Activated T-helper 2 cell treated with anti-CD3 and anti-CD28 coated beads, Interferon-gamma antibody, Interleukin-2, Interleukin-4, amounts not matched to agents 10 μg/mL and 5 μg/mL and 100 μg/mL, durations not matched to agents 14 hours and 24 hours and 36 hours (primary cell): ENCODE measurements at regions of chr5 and their contacts with region 1.

Region 1: DNA sequence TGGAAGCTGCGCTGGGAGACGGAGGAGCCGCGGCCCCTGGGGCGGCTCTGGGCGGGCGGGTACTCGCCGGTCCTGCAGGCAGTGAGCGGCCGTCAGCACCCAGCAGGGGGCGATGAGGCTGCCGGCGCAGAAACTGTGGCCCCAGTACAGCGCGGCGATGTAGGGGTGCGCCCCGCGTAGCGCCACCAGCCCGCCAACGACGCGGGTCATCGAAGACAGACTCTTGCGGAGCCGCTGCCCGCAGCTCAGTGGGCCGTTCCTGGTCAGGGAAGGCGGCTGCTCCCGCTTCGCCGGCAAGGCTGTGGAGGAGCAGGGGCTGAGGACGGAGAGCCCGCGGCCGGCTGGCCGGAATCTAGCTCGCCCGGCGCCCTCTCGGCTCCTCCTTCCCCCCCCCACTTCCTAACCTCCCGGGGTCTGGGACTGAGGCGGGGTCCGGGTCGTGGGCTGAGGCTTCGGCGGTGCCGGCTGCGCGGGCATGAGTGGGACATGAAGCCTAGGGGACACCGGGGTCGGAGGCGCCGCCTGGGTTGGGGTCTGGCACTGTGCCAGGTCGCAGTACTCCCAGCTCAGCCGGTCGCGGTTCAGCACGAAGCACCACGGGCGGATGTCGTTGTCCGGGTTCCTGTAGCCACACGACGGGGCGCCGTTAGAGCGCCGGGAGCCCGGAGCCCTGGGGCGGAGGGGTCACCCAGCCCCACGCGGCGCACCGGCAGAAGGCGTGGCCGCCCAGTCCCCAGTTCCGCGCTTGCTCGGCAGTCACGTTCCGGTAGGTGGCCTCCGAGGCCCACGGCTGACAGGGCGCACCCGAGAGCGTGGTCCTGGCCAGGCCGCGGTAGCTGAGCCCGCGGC is 3.6 kb upstream of the PFN3 start:
- DNase-seq: peak; percentile 81
- H3K4me3 Mint-ChIP-seq: peak overlapping the region; percentile 79
- H3K27ac Mint-ChIP-seq: no peak overlapping the region
- H3K4me1 Mint-ChIP-seq: peaks cover 19% of the 10 kb centered on the region
- H3K27me3 Mint-ChIP-seq: peaks cover 23% of the 10 kb centered on the region

Region 2: DNA sequence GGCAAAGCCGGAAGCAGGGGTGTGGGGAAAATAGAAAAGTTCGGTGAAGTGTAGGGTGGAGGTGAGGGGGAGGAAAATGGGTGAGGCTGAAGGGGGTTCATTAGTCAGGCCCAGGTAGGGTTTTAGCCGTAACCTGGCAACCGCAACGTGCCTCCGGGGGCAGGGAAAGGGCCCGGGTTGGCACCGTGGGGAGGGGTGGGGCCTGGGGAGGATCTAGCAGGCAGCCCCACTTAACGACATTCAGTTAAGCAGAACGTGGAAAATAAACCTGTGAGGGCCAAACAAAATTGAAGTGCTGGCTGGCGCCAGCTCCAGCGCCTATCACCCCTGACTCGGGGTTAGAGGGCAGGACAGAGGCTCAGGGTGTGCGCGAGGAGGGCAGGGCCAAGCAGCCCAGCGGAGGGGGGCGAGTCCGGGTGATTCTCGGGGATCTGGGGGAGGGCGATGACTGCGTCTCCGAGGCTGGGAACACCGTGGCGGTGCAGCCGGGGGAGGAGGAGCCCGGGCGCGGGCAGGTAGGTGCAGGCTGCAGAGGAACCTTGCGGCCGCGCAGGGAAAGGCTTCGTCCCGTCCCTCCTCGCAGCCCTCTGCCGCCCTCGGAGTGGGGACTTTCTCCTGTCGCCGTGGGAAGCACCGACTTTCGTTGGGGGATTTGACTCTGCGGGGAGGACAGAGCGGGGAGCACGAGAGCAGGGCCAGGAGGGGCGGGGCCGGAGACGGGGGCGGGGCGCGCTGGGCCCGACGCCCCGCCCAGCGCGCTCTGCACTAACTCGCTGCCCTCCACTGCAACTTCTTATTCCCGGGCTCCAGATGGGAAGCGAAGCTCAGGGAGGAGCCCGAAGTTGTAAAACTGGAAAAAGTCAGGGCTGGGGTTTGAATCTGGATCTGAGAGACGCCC is 41.2 kb before region 1 on chr5:
- intact Hi-C with region 1: loop called (anchors 5 kb)
- DNase-seq: peak; percentile 44
- H3K4me3 Mint-ChIP-seq: peak overlapping the region; percentile 64
- H3K27ac Mint-ChIP-seq: peak overlapping the region; percentile 43
- H3K4me1 Mint-ChIP-seq: peaks cover 51% of the 10 kb centered on the region
- H3K27me3 Mint-ChIP-seq: no peaks in the 10 kb centered on the region

Region 3: DNA sequence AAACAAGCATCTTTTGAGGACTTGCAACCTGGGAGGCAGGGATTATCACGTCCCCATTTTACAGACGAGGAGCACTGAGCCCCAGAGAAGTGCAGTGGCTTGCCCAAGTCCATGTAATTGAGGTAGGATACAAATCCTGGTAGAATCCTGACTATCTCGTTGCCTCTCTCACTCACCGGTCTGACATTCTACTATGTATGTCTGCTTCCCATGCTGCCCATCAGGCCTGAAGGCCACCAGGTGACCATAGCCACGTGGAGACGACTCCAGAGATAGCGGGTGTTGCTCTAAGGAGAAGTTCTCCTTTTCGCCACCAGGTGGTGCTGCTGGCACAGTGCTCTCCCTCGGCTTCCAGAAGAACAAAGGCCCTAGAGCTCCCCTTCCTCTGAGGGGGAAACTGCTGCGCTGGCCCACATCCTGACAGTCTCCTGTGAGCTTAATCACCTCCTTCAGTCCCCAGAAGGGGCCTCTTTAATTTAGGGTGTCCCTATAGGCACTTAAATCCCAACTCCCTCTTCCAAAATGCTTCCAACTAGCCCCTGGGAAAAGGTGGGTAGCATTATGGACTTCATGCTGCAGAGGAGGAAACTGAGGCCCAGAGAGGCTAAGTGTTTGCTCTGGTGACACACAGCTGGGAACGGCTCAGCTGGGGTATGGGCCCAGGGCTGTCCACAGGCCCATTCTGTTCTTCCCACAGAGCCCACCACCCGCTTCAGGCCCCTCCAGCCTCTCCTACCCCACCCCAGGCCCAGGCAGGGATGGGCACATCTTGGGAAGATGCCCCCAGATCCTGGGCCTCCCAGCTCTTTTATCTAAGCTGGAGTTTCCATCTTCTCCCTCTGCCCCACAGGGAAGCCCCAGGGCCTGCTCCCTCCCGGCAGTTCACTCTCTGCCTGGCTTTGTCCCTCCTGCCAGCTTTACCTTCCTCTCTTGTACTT is 13.4 kb before region 1 on chr5:
- intact Hi-C with region 1: loop called (anchors 1 kb)
- DNase-seq: peak; percentile 82
- H3K4me3 Mint-ChIP-seq: no peak overlapping the region
- H3K27ac Mint-ChIP-seq: peak overlapping the region; percentile 63
- H3K4me1 Mint-ChIP-seq: peaks cover 26% of the 10 kb centered on the region
- H3K27me3 Mint-ChIP-seq: peaks cover 8% of the 10 kb centered on the region

Region 4: GRCh38 chr5:177454397-177455035 is 50.5 kb after region 1 on chr5:
- intact Hi-C with region 1: loop called (anchors 1 kb)
- DNase-seq: peak; percentile 89
- H3K4me3 Mint-ChIP-seq: peak overlapping the region; percentile 84
- H3K27ac Mint-ChIP-seq: no peak overlapping the region
- H3K4me1 Mint-ChIP-seq: peaks cover 17% of the 10 kb centered on the region
- H3K27me3 Mint-ChIP-seq: peaks cover 8% of the 10 kb centered on the region